Vagina (tissue), 2 donors: ENCODE measurements at regions of chr20 and their contacts with region 1.

Region 1: GRCh38 chr20:6496874-6497273 is 270.6 kb upstream of the BMP2 start:
- DNase-seq: no peak
- H3K4me3 ChIP-seq: no peak overlapping the region
- H3K27ac ChIP-seq: no peak overlapping the region
- H3K4me1 ChIP-seq: peaks cover 5% of the 10 kb centered on the region
- H3K27me3 ChIP-seq: no peaks in the 10 kb centered on the region
- CTCF ChIP-seq: no peak
- POLR2A ChIP-seq: no peak

Region 2: GRCh38 chr20:6469695-6470094 is 27.2 kb before region 1 on chr20:
- intact Hi-C with region 1: loop called (anchors 1 kb)
- DNase-seq: no peak
- H3K4me3 ChIP-seq: no peak overlapping the region
- H3K27ac ChIP-seq: no peak overlapping the region
- H3K4me1 ChIP-seq: no peaks in the 10 kb centered on the region
- H3K27me3 ChIP-seq: no peaks in the 10 kb centered on the region
- CTCF ChIP-seq: no peak
- POLR2A ChIP-seq: no peak

Region 3: GRCh38 chr20:6533761-6534479 is 37.0 kb after region 1 on chr20:
- intact Hi-C with region 1: no loop called
- DNase-seq: no peak
- H3K4me3 ChIP-seq: peak overlapping the region; percentile 6 to 27
- H3K27ac ChIP-seq: no peak overlapping the region
- H3K4me1 ChIP-seq: no peaks in the 10 kb centered on the region
- H3K27me3 ChIP-seq: no peaks in the 10 kb centered on the region
- CTCF ChIP-seq: no peak
- POLR2A ChIP-seq: no peak